Esophagus muscularis mucosa (tissue), 4 donors: ENCODE measurements at regions of chr22 and their contacts with region 1.

Region 1: DNA sequence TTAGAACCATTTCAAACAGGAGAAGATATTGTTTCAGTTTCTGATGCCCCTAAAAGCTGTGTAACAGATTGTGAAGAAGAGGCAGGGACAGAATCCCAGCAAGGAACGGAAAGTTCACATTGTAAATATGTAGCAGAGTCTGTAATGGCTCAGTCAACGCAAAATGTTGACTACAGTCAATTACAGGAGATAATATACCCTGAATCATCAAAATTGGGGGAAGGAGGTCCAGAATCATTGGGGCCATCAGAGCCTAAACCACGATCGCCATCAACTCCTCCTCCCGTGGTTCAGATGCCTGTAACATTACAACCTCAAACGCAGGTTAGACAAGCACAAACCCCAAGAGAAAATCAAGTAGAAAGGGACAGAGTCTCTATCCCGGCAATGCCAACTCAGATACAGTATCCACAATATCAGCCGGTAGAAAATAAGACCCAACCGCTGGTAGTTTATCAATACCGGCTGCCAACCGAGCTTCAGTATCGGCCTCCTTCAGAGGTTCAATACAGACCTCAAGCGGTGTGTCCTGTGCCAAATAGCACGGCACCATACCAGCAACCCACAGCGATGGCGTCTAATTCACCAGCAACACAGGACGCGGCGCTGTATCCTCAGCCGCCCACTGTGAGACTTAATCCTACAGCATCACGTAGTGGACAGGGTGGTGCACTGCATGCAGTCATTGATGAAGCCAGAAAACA is 40.8 kb downstream of the IGLL1 start:
- DNase-seq: no peak
- H3K4me3 ChIP-seq: peak overlapping the region in 1 of 4 donors; percentile 27
- H3K27ac ChIP-seq: no peak overlapping the region
- H3K4me1 ChIP-seq: peaks cover 0 to 33% (median 25%) of the 10 kb centered on the region in 4 donors
- H3K27me3 ChIP-seq: no peaks in the 10 kb centered on the region
- CTCF ChIP-seq: peak; percentile 73 to 99 (median 83)
- EP300 ChIP-seq: no peak
- POLR2A ChIP-seq: no peak

Region 2: GRCh38 chr22:23402275-23403151 is 136.8 kb before region 1 on chr22:
- intact Hi-C with region 1: loop called (anchors 5 kb)
- DNase-seq: no peak
- H3K4me3 ChIP-seq: peak overlapping the region; percentile 45 to 57 (median 52)
- H3K27ac ChIP-seq: peak overlapping the region; percentile 22 to 41 (median 38)
- H3K4me1 ChIP-seq: peaks cover 4 to 17% (median 12%) of the 10 kb centered on the region in 4 donors
- H3K27me3 ChIP-seq: peaks cover 0 to 19% (median 0%) of the 10 kb centered on the region in 4 donors
- CTCF ChIP-seq: peak; percentile 49 to 72 (median 66)
- EP300 ChIP-seq: no peak
- POLR2A ChIP-seq: no peak

Region 3: GRCh38 chr22:23431337-23432072 is 107.8 kb before region 1 on chr22:
- intact Hi-C with region 1: loop called (anchors 10 kb)
- DNase-seq: no peak
- H3K4me3 ChIP-seq: no peak overlapping the region
- H3K27ac ChIP-seq: no peak overlapping the region
- H3K4me1 ChIP-seq: peaks cover 3 to 16% (median 12%) of the 10 kb centered on the region in 4 donors
- H3K27me3 ChIP-seq: no peaks in the 10 kb centered on the region
- CTCF ChIP-seq: no peak
- EP300 ChIP-seq: no peak
- POLR2A ChIP-seq: no peak

Region 4: DNA sequence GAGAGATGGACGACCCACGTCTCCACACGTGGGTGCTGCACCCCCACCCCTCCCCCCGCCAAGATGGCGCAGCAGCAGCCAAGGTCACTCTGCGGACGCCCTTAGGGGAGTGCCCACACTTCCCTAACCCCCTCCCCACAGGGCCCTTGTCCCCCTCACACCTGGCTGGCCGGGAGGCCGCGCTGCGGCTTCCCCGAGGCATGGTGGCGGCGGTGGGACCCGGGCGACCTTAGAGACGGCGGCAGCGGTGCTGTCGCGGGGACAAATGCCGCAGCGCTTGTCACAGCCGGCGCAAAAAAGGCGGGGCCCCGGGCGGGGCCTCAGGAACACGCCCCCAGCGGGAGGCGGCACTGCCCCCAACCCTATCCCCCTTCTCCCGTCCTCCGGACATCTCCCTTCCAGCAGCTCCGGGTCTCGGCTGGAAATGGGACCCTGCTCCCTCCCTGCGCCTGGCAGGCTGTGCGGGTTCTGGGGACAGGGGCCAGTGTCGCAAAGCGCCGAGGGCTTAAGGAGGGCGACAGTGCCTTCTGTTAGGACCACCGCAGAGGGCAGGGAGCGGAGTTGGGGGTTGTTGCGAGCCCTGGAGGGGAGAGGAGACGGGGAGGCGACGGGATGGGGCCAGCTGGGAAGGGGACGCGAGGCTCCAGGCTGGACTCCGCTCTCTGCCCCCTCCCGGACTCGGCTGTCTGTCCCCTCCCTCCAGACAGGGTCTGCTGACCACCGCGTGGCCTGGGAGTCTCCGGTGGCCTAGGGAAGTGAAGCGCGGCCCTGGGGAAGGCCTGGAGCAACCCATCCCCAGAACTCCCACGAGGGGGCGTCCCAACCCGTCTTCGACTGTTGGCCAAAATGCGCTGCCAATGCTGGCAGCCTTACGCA is 228.6 kb after region 1 on chr22 and contains the start of gene CHCHD10:
- intact Hi-C with region 1: loop called (anchors 10 kb)
- DNase-seq: peak; percentile 95
- H3K4me3 ChIP-seq: peak within 1 kb of the TSS; percentile 63 to 72 (median 71)
- H3K27ac ChIP-seq: peak within 1 kb of the TSS; percentile 87 to 91 (median 90)
- H3K4me1 ChIP-seq: peaks cover 52 to 96% (median 90%) of the 10 kb centered on the region in 4 donors
- H3K27me3 ChIP-seq: no peaks in the 10 kb centered on the region
- CTCF ChIP-seq: peak; percentile 79 to 89 (median 86)
- EP300 ChIP-seq: no peak
- POLR2A ChIP-seq: peak; percentile 79
- total RNA-seq, gene CHCHD10: 22.9 to 97.7 (median 44.6) TPM

Region 5: DNA sequence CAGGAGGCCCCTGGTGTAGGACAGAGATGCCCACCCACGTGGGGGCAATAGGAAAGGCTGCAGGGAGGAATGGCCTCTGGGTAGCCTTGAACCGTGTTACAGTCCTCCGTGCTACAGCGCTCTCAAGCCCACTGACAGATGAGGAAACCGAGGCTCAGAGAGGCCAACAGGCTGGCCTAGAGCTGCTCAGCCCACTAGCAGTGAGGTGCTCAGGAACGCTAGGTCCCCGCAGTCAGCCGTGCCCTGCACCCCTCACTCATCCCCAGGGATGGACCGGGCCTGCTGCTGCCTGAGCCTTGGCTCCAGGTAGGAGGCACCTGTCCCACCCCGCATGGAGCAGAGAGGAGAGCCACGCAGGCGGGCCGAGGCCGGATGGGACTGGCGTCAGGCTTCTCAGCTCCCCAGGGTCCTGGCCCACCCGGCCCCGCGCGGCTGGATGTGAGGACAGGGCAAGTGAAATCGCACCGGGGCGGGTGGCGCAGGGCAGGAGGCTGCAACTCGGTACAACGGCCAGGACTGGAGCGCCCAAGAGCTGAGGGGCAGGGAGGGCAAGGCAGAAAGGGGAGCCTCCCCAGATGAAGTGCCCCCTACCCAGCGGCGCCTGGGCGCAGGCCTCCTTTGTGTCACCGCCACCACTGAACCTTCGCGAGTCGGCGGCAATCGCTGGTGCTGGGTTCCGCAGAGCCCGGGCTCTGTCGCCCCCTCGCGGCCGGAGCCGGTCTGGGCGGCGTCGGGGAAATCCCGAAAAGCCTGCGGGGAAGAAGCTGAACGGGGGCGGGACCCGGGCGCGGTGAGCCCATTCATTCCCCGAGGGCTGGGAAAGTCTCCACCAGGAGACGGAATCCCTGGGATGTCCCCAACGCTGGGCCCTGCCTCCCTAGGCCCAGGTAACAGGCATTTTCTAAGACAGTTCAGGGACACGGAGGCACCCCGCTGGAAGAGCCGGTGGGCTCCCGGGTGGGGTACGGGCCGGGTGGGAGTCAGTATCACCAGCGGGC is 310.0 kb after region 1 on chr22:
- intact Hi-C with region 1: loop called (anchors 5 kb)
- DNase-seq: no peak
- H3K4me3 ChIP-seq: peak overlapping the region in 3 of 4 donors; percentile 24 to 44 (median 26)
- H3K27ac ChIP-seq: no peak overlapping the region
- H3K4me1 ChIP-seq: peaks cover 35 to 40% (median 37%) of the 10 kb centered on the region in 4 donors
- H3K27me3 ChIP-seq: no peaks in the 10 kb centered on the region
- CTCF ChIP-seq: peak in 2 of 3 experiments; percentile 97 to 98
- EP300 ChIP-seq: no peak
- POLR2A ChIP-seq: no peak